ENCODE measurements at regions of chr6 and their contacts with region 1.

Region 1: DNA sequence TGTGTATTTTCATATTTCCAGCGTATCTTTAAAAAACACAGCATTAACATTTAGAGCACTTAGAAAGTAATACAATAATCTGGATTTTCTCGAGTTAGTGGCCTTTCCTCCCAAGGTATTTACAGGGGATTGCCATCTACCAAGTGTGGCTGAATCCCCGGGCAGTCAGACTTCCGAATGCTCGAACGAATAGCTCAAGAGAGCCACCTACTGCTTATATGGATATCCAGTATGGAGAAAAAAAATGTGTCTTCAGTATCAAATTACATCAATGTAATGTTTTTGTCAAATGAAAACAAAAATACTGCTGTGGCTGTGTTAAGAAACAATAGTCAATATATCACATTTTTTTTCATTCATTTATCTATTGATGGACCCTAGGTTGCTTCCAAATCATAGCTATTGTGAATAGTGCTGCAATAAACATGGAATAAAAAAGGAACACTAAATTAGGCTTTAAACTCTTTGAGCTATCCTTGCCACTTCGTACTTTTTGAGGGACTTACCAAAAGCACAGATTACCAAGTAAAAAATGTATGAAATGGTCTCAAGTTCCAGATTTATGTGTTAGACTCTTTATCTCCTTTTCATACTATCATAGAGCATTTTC is 654.5 kb upstream of the PTCHD4 start:
- DNase-seq: peak; percentile 58
- H3K4me3 ChIP-seq: no peak overlapping the region
- H3K27ac ChIP-seq: peak overlapping the region; percentile 62
- H3K4me1 ChIP-seq: peaks cover 17% of the 10 kb centered on the region
- H3K27me3 ChIP-seq: no peaks in the 10 kb centered on the region
- CTCF ChIP-seq: peak; percentile 64 to 75

Region 2: DNA sequence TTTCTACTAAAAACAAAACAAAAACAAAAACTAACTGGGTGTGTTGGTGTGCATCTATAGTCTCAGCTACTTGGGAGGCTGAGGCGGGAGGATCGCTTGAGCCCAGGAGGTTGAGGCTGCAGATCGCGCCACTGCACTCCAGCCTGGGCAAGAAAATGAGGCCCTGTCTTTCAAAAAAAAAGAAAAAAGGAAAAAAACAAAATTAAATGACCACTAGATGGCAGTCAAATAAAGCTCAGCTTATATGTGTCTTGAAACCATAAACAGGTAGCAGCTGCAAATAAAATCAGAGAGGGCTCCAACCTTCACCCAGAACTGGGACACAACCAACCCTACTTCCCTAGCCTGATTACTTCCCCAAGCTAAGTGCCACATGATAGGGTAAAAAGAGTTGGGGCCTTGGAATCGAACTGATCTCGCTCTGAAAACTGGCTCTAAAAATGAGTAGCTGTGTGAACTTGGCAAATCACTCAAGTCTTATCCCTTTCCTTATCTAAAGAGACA is 1134.1 kb before region 1 on chr6:
- CTCF ChIA-PET with region 1: no interaction called
- dilution Hi-C with region 1: no loop called
- in situ Hi-C with region 1: no loop called
- intact Hi-C with region 1: loop called (anchors 10 kb)
- DNase-seq: peak; percentile 60
- H3K4me3 ChIP-seq: no peak overlapping the region
- H3K27ac ChIP-seq: no peak overlapping the region
- H3K4me1 ChIP-seq: peaks cover 5% of the 10 kb centered on the region
- H3K27me3 ChIP-seq: no peaks in the 10 kb centered on the region
- CTCF ChIP-seq: peak; percentile 49 to 59

Region 3: GRCh38 chr6:47977314-47977713 is 788.1 kb before region 1 on chr6:
- CTCF ChIA-PET with region 1: no interaction called
- dilution Hi-C with region 1: no loop called
- in situ Hi-C with region 1: no loop called
- intact Hi-C with region 1: no loop called
- DNase-seq: no peak
- H3K4me3 ChIP-seq: no peak overlapping the region
- H3K27ac ChIP-seq: no peak overlapping the region
- H3K4me1 ChIP-seq: no peaks in the 10 kb centered on the region
- H3K27me3 ChIP-seq: peaks cover 1% of the 10 kb centered on the region
- CTCF ChIP-seq: no peak

Region 4: DNA sequence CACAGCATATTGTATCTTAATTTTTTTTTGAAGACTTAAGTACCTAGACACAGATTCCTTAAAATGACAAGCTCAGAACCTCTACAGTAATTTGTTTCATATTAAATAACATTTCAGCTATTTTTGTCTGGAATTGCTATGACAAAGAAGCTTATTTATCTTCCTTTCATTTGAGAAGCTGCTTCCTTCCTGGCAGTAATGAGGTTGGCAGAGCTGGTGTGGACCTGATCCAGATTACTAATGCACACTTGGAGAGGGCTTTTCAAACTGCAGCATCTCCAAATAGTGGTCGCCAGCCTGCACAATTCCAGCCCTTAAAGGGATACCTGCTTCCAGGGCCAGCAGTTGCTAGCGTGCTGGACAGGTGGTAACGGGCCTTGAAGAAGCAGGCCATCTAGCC is 666.5 kb before region 1 on chr6:
- CTCF ChIA-PET with region 1: no interaction called
- dilution Hi-C with region 1: no loop called
- in situ Hi-C with region 1: loop called in 1 of 2 experiments (anchors 10 kb)
- intact Hi-C with region 1: no loop called
- DNase-seq: peak; percentile 31
- H3K4me3 ChIP-seq: no peak overlapping the region
- H3K27ac ChIP-seq: no peak overlapping the region
- H3K4me1 ChIP-seq: peaks cover 24% of the 10 kb centered on the region
- H3K27me3 ChIP-seq: no peaks in the 10 kb centered on the region
- CTCF ChIP-seq: no peak

Region 5: DNA sequence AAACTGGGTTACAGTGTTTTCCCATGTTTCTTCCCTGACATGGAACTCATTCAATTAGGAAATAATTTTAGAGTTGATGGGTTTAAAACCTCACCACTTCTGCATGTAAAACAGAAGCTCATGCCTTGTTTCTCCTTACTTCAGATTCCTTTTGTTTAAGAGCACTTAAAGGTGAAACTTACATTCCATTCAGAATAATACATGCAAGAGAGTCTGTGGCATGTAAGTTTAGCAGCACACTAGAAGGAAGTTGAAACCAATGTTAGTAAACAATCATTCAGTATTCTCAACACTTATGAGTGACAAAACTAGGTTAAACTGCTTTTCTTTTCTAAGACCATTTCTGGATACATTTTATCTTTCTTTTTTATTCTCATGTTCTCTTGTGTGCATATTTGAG is 158.8 kb before region 1 on chr6:
- CTCF ChIA-PET with region 1: no interaction called
- dilution Hi-C with region 1: no loop called
- in situ Hi-C with region 1: no loop called
- intact Hi-C with region 1: no loop called
- DNase-seq: no peak
- H3K4me3 ChIP-seq: no peak overlapping the region
- H3K27ac ChIP-seq: no peak overlapping the region
- H3K4me1 ChIP-seq: no peaks in the 10 kb centered on the region
- H3K27me3 ChIP-seq: peaks cover 7% of the 10 kb centered on the region
- CTCF ChIP-seq: no peak

Region 6: DNA sequence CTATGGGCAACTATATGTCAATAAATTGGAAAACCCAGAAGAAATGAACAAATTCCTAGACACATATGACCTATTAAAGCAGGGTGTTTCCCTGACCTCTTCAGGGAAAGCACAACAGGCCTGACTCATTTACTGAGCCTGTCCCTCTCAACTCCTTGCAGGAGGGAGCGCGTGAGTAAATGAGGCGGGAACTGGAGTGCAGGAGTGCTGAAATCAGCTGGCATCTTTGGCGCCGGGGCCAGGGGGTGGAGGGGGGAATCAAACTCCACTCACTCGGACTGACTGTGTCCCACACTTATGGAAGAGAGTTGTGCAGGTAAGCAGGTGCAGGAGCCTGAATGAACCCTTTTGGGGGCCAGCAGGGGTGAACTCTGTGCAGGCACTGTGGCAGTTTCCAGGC is 16.8 kb after region 1 on chr6:
- CTCF ChIA-PET with region 1: interaction called, 12 read pairs
- dilution Hi-C with region 1: no loop called
- in situ Hi-C with region 1: no loop called
- intact Hi-C with region 1: no loop called
- DNase-seq: peak; percentile 44
- H3K4me3 ChIP-seq: no peak overlapping the region
- H3K27ac ChIP-seq: no peak overlapping the region
- H3K4me1 ChIP-seq: peaks cover 10% of the 10 kb centered on the region
- H3K27me3 ChIP-seq: no peaks in the 10 kb centered on the region
- CTCF ChIP-seq: no peak

Region 7: GRCh38 chr6:48833916-48834315 is 68.5 kb after region 1 on chr6:
- CTCF ChIA-PET with region 1: no interaction called
- dilution Hi-C with region 1: no loop called
- in situ Hi-C with region 1: no loop called
- intact Hi-C with region 1: no loop called
- DNase-seq: no peak
- H3K4me3 ChIP-seq: no peak overlapping the region
- H3K27ac ChIP-seq: no peak overlapping the region
- H3K4me1 ChIP-seq: peaks cover 8% of the 10 kb centered on the region
- H3K27me3 ChIP-seq: no peaks in the 10 kb centered on the region
- CTCF ChIP-seq: no peak

Region 8: GRCh38 chr6:48994811-48995210 is 229.4 kb after region 1 on chr6:
- CTCF ChIA-PET with region 1: no interaction called
- dilution Hi-C with region 1: no loop called
- in situ Hi-C with region 1: no loop called
- intact Hi-C with region 1: loop called (anchors 5 kb)
- DNase-seq: no peak
- H3K4me3 ChIP-seq: no peak overlapping the region
- H3K27ac ChIP-seq: no peak overlapping the region
- H3K4me1 ChIP-seq: no peaks in the 10 kb centered on the region
- H3K27me3 ChIP-seq: no peaks in the 10 kb centered on the region
- CTCF ChIP-seq: peak in 1 of 2 donors; percentile 11

Measured in mammary epithelial cell (primary cell).